Naive thymus-derived CD8-positive, alpha-beta T cell (primary cell): ENCODE measurements at regions of chr19 and their contacts with region 1.

Region 1: GRCh38 chr19:37466798-37467607 is at the start of gene ZNF569:
- DNase-seq: peak; percentile 74 to 95 (median 92)
- ATAC-seq: peak; percentile 63 to 66
- H3K4me3 Mint-ChIP-seq: peak within 1 kb of the TSS; percentile 88 to 98 (median 97)
- H3K27ac Mint-ChIP-seq: peak within 1 kb of the TSS; percentile 92 to 100 (median 98)
- H3K4me1 Mint-ChIP-seq: peaks cover 33 to 47% (median 40%) of the 10 kb centered on the region in 4 donors
- H3K27me3 Mint-ChIP-seq: no peaks in the 10 kb centered on the region
- polyA plus RNA-seq, gene ZNF569: 3.0 to 6.6 (median 6.5) TPM

Region 2: DNA sequence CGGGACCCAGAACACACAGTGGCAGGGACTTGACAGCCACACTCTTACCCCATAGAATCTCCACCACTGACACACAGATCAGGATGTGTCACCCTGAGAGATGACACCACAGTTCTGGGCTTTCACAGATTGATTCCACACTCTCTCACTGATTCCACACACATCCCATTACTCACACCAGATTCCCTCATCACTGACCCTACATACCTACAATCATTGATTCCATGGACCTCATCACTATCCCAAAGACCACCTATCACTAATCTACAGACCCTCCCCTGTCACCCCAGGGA is 153.7 kb before region 1 on chr19:
- POLR2A ChIA-PET with region 1: interaction called, 19 read pairs
- DNase-seq: no peak
- ATAC-seq: no peak
- H3K4me3 Mint-ChIP-seq: peak overlapping the region; percentile 39 to 90 (median 85)
- H3K27ac Mint-ChIP-seq: peak overlapping the region; percentile 29 to 94 (median 84)
- H3K4me1 Mint-ChIP-seq: peaks cover 10 to 24% (median 19%) of the 10 kb centered on the region in 4 donors
- H3K27me3 Mint-ChIP-seq: peaks cover 0 to 19% (median 10%) of the 10 kb centered on the region in 5 donors

Region 3: DNA sequence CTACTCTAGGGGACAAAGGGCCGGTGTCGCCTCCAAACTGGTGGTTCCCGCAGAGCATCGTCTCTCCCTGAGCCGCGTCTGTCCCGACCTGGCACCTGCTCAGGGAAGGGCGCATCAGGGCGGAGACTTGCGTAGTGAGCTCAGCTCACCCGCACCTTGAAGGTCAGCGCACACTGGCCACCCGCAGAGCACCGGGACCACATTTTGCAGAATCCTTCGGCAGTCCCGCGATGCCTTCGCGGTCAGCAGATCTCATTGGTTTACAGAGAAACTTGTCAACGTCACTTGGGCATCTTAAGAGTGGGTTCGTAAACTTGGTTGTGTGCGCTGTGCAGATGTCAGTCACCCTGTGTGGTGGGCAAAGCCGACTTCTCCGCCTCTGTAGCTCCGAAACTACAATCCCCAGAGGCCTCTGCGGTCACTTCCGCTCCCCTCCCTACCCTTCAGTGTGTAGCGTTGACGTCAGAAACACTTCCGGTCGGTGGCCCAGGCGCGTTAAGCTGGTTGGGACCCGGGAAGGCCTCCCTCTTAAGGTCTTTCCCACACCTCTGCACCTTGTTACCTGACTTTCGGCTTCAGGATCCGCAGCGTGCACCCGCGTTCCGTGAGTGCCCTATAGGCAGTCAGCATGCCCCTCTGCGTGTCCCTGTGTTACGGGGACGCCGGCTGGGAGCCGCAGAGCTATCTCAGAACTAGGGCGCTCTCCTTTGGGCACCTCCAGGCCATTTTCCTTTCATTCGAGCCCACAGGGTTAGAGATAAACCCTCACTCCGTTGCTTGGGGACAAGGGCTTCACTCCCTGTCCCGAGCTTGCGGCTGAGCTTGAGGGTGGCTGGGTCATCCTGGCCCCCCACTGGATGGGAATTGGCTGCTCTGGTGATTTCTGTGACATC is 132.6 kb before region 1 on chr19:
- POLR2A ChIA-PET with region 1: interaction called, 15 read pairs
- DNase-seq: peak; percentile 72 to 97 (median 90)
- ATAC-seq: peak; percentile 97 to 98
- H3K4me3 Mint-ChIP-seq: peak overlapping the region; percentile 84 to 97 (median 90)
- H3K27ac Mint-ChIP-seq: peak overlapping the region; percentile 79 to 98 (median 95)
- H3K4me1 Mint-ChIP-seq: peaks cover 9 to 34% (median 27%) of the 10 kb centered on the region in 4 donors
- H3K27me3 Mint-ChIP-seq: no peaks in the 10 kb centered on the region

Region 4: DNA sequence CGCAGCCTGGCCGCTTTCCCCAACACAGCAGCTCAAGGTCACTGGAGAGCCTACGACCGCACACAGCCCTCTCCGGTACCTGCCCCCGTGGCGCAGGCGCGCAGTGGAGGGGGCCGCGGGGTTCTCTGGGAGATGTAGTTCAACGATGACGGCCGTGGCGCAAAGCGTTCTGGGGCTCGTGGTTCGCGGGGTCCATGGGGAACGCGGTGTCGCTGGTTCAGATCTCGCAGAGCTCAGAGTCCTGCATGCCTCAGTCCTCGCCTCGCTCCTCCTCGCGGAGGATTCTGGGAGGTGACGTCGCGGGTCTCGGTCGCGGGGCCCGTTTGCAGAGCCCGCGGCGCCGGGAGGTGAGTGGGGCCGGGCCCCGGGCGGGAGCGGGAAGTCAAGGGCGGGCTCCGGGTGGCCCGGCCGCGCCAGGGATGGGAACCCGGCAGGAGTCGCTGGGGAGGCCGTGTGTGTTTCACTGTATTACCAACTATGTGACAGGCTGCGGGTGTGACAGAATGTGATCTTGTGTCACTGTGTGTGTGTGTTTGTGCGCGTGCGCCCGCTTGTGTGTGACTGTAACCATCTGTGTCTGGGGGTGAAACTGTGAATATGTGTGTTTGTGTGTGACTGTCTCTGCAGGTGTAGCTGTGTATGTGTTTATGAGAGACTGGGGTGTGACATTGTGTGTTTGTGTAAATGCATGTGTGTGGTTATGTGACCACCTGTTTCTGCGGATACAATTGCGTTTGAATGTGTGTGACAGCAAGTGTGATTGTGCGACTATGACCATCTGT is 95.9 kb before region 1 on chr19 and contains the start of gene ZNF527:
- POLR2A ChIA-PET with region 1: interaction called, 24 read pairs
- DNase-seq: peak; percentile 92 to 98 (median 96)
- ATAC-seq: peak; percentile 95 to 96
- H3K4me3 Mint-ChIP-seq: peak within 1 kb of the TSS; percentile 96 to 100 (median 99)
- H3K27ac Mint-ChIP-seq: peak within 1 kb of the TSS; percentile 78 to 99 (median 98)
- H3K4me1 Mint-ChIP-seq: peaks cover 16 to 27% (median 17%) of the 10 kb centered on the region in 4 donors
- H3K27me3 Mint-ChIP-seq: no peaks in the 10 kb centered on the region
- polyA plus RNA-seq, gene ZNF527: 8.7 to 13.1 (median 10.9) TPM

Region 5: DNA sequence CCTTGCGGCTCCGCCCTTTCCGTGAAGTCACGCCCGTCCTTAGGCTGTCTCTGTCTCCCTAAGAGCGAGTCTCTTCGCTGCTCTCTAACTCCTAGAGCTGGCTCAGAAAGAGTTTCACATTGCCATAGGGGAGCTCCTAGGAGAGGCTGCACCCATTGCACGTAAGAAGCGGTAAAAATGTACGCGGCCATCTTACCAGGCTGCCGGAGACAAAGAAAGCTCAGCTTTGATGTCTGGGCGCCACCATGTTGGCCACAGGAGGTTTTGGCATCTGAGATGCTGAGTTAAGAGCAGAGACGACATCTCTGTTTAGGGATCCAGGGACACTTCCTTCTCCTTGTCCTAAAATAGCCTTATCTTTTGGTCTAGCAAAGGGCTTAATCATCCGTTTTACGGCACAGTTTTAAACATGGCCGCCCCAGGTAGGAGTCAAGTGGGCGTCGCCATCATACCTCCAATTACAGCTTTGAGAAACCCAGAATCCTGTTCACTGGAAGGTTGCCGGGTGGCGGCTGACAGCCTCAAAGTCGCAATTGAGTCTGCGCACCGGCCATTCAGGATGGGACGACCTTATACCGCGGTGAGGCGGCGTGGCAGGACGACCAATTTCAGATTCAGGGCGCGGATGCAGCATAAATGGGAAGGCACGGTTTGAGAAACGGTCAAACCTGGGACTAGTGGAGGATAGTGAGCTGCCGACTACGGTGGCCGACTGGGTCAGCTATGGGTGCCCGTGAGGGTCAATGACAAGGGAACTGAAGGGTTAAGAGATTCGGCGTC is 39.6 kb after region 1 on chr19 and contains the start of gene ZNF793:
- POLR2A ChIA-PET with region 1: interaction called, 62 read pairs
- DNase-seq: peak; percentile 65 to 93 (median 82)
- ATAC-seq: peak; percentile 88 to 89
- H3K4me3 Mint-ChIP-seq: no peak within 1 kb of the TSS
- H3K27ac Mint-ChIP-seq: no peak within 1 kb of the TSS
- H3K4me1 Mint-ChIP-seq: no peaks in the 10 kb centered on the region
- H3K27me3 Mint-ChIP-seq: no peaks in the 10 kb centered on the region
- polyA plus RNA-seq, gene ZNF793: 2.7 to 4.4 (median 2.8) TPM

Region 6: GRCh38 chr19:37594304-37594981 is 127.4 kb after region 1 on chr19 and contains the starts of genes ZNF540 and ZNF571:
- POLR2A ChIA-PET with region 1: interaction called, 50 read pairs
- DNase-seq: peak; percentile 83 to 96 (median 91)
- ATAC-seq: peak; percentile 91 to 94
- H3K4me3 Mint-ChIP-seq: peak within 1 kb of the TSS; percentile 93 to 99 (median 98)
- H3K27ac Mint-ChIP-seq: peak within 1 kb of the TSS; percentile 96 to 100 (median 98)
- H3K4me1 Mint-ChIP-seq: peaks cover 31 to 41% (median 33%) of the 10 kb centered on the region in 4 donors
- H3K27me3 Mint-ChIP-seq: peaks cover 0 to 3% (median 0%) of the 10 kb centered on the region in 5 donors
- polyA plus RNA-seq, gene ZNF540: 6.6 to 9.1 (median 9.0) TPM
- polyA plus RNA-seq, gene ZNF571: 5.5 to 10.7 (median 6.6) TPM

Region 7: DNA sequence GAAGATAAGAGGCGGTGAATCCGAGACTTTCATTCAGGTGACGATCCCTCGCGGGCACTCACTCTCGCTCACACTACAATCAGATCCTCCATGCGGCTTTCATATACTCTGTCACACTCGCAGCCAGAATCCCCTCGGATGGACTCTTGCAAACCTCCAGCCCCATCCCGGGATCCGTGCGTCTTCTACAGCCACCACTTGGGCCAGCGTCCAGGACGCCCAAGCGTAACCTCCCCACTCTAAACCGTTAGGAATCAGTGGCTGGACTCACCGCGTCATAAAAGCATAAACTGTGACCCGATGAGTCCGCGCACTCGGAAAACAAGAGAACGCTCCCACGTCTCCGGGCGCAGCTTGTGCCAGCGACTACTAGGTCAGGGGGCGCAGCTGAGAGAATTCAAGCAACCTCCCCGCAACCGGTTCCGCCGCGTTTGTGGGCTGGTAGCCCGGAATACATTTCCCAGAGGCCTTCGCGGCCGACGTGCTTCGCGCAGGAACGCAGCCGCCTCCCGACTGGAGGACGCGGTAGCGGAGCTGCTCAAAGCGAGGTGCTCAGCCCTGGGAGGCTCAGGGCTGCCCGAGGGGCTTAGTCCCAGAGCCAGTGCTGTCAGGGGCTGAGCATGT is 225.0 kb after region 1 on chr19:
- POLR2A ChIA-PET with region 1: interaction called, 13 read pairs
- DNase-seq: peak; percentile 55 to 93 (median 75)
- ATAC-seq: peak; percentile 95 to 98
- H3K4me3 Mint-ChIP-seq: peak overlapping the region; percentile 89 to 99 (median 94)
- H3K27ac Mint-ChIP-seq: peak overlapping the region; percentile 87 to 99 (median 98)
- H3K4me1 Mint-ChIP-seq: peaks cover 6 to 13% (median 12%) of the 10 kb centered on the region in 4 donors
- H3K27me3 Mint-ChIP-seq: no peaks in the 10 kb centered on the region